CD4-positive, alpha-beta memory T cell (primary cell): ENCODE measurements at regions of chr19 and their contacts with region 1.

Region 1: GRCh38 chr19:10580979-10581631 is 6.0 kb downstream of the AP1M2 start:
- DNase-seq: peak; percentile 84 to 88 (median 84)
- H3K4me3 ChIP-seq: no peak overlapping the region
- H3K4me3 Mint-ChIP-seq: peak overlapping the region in 4 of 8 donors; percentile 0 to 65 (median 30)
- H3K27ac ChIP-seq: no peak overlapping the region
- H3K27ac Mint-ChIP-seq: peak overlapping the region in 3 of 7 donors; percentile 4 to 26 (median 25)
- H3K4me1 ChIP-seq: peaks cover 22% of the 10 kb centered on the region
- H3K4me1 Mint-ChIP-seq: peaks cover 9 to 24% (median 16%) of the 10 kb centered on the region in 4 donors
- H3K27me3 ChIP-seq: no peaks in the 10 kb centered on the region
- H3K27me3 Mint-ChIP-seq: peaks cover 2% of the 10 kb centered on the region in 2 donors

Region 2: GRCh38 chr19:10292206-10292788 is 288.8 kb before region 1 on chr19:
- CTCF ChIA-PET with region 1: no interaction called
- POLR2A ChIA-PET with region 1: no interaction called
- intact Hi-C with region 1: no loop called
- DNase-seq: peak; percentile 49 to 68 (median 55)
- H3K4me3 ChIP-seq: peak overlapping the region; percentile 34 to 58
- H3K4me3 Mint-ChIP-seq: peak overlapping the region; percentile 67 to 89 (median 79)
- H3K27ac ChIP-seq: no peak overlapping the region
- H3K27ac Mint-ChIP-seq: peak overlapping the region in 4 of 7 donors; percentile 37 to 89 (median 68)
- H3K4me1 ChIP-seq: peaks cover 82% of the 10 kb centered on the region
- H3K4me1 Mint-ChIP-seq: peaks cover 36 to 73% (median 56%) of the 10 kb centered on the region in 4 donors
- H3K27me3 ChIP-seq: peaks cover 67% of the 10 kb centered on the region
- H3K27me3 Mint-ChIP-seq: peaks cover 43 to 48% of the 10 kb centered on the region in 2 donors

Region 3: GRCh38 chr19:10543420-10544241 is 37.5 kb before region 1 on chr19 and contains the start of gene ATG4D:
- CTCF ChIA-PET with region 1: interaction called, 13 read pairs
- POLR2A ChIA-PET with region 1: no interaction called
- intact Hi-C with region 1: no loop called
- DNase-seq: peak; percentile 85 to 89 (median 85)
- H3K4me3 ChIP-seq: peak within 1 kb of the TSS; percentile 49 to 66
- H3K4me3 Mint-ChIP-seq: peak within 1 kb of the TSS; percentile 89 to 94 (median 91)
- H3K27ac ChIP-seq: peak within 1 kb of the TSS; percentile 86
- H3K27ac Mint-ChIP-seq: peak within 1 kb of the TSS; percentile 83 to 97 (median 91)
- H3K4me1 ChIP-seq: peaks cover 18% of the 10 kb centered on the region
- H3K4me1 Mint-ChIP-seq: peaks cover 9 to 20% (median 14%) of the 10 kb centered on the region in 4 donors
- H3K27me3 ChIP-seq: no peaks in the 10 kb centered on the region
- H3K27me3 Mint-ChIP-seq: peaks cover 5 to 10% of the 10 kb centered on the region in 2 donors
- total RNA-seq, gene ATG4D: 51.5 to 58.6 TPM

Region 4: GRCh38 chr19:10593820-10594637 is 12.9 kb after region 1 on chr19:
- CTCF ChIA-PET with region 1: interaction called, 20 read pairs
- POLR2A ChIA-PET with region 1: no interaction called
- intact Hi-C with region 1: no loop called
- DNase-seq: no peak
- H3K4me3 ChIP-seq: no peak overlapping the region
- H3K4me3 Mint-ChIP-seq: no peak overlapping the region
- H3K27ac ChIP-seq: no peak overlapping the region
- H3K27ac Mint-ChIP-seq: peak overlapping the region in 3 of 7 donors; percentile 1 to 74 (median 61)
- H3K4me1 ChIP-seq: peaks cover 20% of the 10 kb centered on the region
- H3K4me1 Mint-ChIP-seq: peaks cover 9 to 26% (median 16%) of the 10 kb centered on the region in 4 donors
- H3K27me3 ChIP-seq: no peaks in the 10 kb centered on the region
- H3K27me3 Mint-ChIP-seq: no peaks in the 10 kb centered on the region

Region 5: GRCh38 chr19:10602330-10603083 is 21.4 kb after region 1 on chr19:
- CTCF ChIA-PET with region 1: interaction called, 20 read pairs
- POLR2A ChIA-PET with region 1: interaction called, 31 read pairs
- intact Hi-C with region 1: loop called (anchors 1 kb)
- DNase-seq: peak; percentile 82 to 84 (median 84)
- H3K4me3 ChIP-seq: peak overlapping the region; percentile 85 to 94
- H3K4me3 Mint-ChIP-seq: peak overlapping the region; percentile 98 to 99 (median 99)
- H3K27ac ChIP-seq: peak overlapping the region; percentile 96
- H3K27ac Mint-ChIP-seq: peak overlapping the region; percentile 99 to 100 (median 100)
- H3K4me1 ChIP-seq: peaks cover 29% of the 10 kb centered on the region
- H3K4me1 Mint-ChIP-seq: peaks cover 17 to 34% (median 21%) of the 10 kb centered on the region in 4 donors
- H3K27me3 ChIP-seq: no peaks in the 10 kb centered on the region
- H3K27me3 Mint-ChIP-seq: no peaks in the 10 kb centered on the region

Region 6: GRCh38 chr19:10612491-10613119 is 31.5 kb after region 1 on chr19:
- CTCF ChIA-PET with region 1: interaction called, 18 read pairs
- POLR2A ChIA-PET with region 1: interaction called, 3 read pairs
- intact Hi-C with region 1: no loop called
- DNase-seq: no peak
- H3K4me3 ChIP-seq: no peak overlapping the region
- H3K4me3 Mint-ChIP-seq: peak overlapping the region in 1 of 8 donors; percentile 45
- H3K27ac ChIP-seq: no peak overlapping the region
- H3K27ac Mint-ChIP-seq: peak overlapping the region in 4 of 7 donors; percentile 29 to 77 (median 43)
- H3K4me1 ChIP-seq: peaks cover 35% of the 10 kb centered on the region
- H3K4me1 Mint-ChIP-seq: peaks cover 8 to 40% (median 27%) of the 10 kb centered on the region in 4 donors
- H3K27me3 ChIP-seq: no peaks in the 10 kb centered on the region
- H3K27me3 Mint-ChIP-seq: no peaks in the 10 kb centered on the region